CD4-positive, alpha-beta memory T cell (primary cell): ENCODE measurements at regions of chr1 and their contacts with region 1.

Region 1: DNA sequence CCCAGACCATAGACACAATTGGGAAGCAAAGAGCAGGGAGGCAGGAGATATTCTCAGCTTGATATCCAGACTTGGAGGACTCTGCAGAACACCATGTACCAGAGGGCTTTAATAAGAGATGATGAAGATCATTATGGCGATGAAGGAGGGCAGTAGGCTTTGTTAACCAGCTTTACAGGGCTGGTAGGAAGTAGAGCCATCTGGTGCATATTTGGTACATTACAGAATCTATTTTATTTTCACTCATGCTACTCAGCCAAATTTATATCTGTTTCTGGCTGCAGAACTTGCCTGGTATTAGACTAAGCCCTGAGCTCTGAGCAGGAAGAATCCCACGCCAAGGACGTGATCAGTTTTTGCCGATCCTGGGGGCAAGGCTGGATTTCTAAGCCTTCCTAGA is 61.8 kb upstream of the SYT6 start:
- DNase-seq: no peak
- H3K4me3 ChIP-seq: no peak overlapping the region
- H3K4me3 Mint-ChIP-seq: no peak overlapping the region
- H3K27ac ChIP-seq: no peak overlapping the region
- H3K27ac Mint-ChIP-seq: no peak overlapping the region
- H3K4me1 ChIP-seq: no peaks in the 10 kb centered on the region
- H3K4me1 Mint-ChIP-seq: peaks cover 3 to 8% (median 6%) of the 10 kb centered on the region in 4 donors
- H3K27me3 ChIP-seq: no peaks in the 10 kb centered on the region
- H3K27me3 Mint-ChIP-seq: peaks cover 6 to 7% of the 10 kb centered on the region in 2 donors

Region 2: DNA sequence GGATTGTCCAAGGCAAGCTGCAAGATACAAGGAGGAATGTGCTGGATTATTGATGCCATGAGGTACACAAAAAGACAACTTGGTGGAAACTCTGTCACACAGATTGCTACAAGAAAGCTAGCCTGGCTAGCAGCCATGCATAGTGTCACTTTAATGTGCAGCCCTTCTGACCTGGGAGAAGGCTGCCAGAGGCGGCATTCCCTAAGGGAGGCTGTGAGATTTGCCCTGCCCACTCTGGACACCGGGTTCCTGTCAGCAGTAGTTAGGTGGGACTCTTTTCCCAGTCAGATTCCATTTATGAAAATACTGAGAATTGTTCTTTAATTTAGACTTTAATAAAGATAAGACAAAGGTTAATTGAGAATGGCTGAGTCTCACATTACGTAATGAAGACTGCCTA is 13.9 kb before region 1 on chr1:
- CTCF ChIA-PET with region 1: no interaction called
- POLR2A ChIA-PET with region 1: no interaction called
- intact Hi-C with region 1: loop called (anchors 2 kb)
- DNase-seq: no peak
- H3K4me3 ChIP-seq: no peak overlapping the region
- H3K4me3 Mint-ChIP-seq: no peak overlapping the region
- H3K27ac ChIP-seq: no peak overlapping the region
- H3K27ac Mint-ChIP-seq: no peak overlapping the region
- H3K4me1 ChIP-seq: no peaks in the 10 kb centered on the region
- H3K4me1 Mint-ChIP-seq: no peaks in the 10 kb centered on the region
- H3K27me3 ChIP-seq: no peaks in the 10 kb centered on the region
- H3K27me3 Mint-ChIP-seq: peaks cover 12 to 24% of the 10 kb centered on the region in 2 donors